ENCODE measurements at regions of chr6 and their contacts with region 1.

Region 1: DNA sequence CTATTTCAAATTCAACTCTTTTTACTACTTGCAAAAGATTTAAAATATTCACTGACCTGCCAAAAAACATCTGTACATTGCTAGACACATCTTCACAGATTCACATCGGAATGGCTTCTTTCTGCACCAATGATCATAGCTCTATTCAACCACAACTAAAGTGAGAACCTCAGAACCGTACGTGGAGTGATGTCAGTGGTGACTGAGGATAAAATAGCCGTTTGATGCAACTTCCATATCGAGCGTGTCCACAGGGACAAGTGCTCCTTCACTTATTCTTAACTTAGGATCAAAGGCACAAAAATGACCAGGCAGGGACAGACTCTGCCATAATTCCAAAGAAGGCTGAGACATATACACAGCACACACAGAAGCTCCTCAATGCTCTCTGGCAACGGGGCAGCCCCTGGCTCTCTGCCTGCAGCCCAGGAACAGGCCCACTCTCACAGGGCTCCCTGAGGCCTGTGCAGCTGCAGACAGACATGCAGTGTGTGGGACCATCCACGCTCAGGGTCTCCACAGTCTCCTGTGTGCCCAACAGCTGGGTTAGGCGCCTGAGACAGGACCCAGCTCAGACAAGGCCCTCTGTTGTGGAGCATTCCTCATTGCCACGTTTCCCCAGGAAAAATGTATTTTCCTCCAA is 22.8 kb downstream of the FYN start:
- DNase-seq: peak in 2 of 9 experiments; percentile 57 to 74
- ATAC-seq: peak; percentile 57
- H3K4me3 ChIP-seq: no peak overlapping the region
- H3K4me3 Mint-ChIP-seq: peak overlapping the region; percentile 40
- H3K27ac ChIP-seq: peak overlapping the region in 1 of 2 experiments; percentile 29
- H3K27ac Mint-ChIP-seq: peak overlapping the region; percentile 85
- H3K4me1 ChIP-seq: peaks cover 97% of the 10 kb centered on the region
- H3K4me1 Mint-ChIP-seq: peaks cover 65% of the 10 kb centered on the region
- H3K27me3 ChIP-seq: no peaks in the 10 kb centered on the region
- H3K27me3 Mint-ChIP-seq: no peaks in the 10 kb centered on the region
- CTCF ChIP-seq: no peak

Region 2: DNA sequence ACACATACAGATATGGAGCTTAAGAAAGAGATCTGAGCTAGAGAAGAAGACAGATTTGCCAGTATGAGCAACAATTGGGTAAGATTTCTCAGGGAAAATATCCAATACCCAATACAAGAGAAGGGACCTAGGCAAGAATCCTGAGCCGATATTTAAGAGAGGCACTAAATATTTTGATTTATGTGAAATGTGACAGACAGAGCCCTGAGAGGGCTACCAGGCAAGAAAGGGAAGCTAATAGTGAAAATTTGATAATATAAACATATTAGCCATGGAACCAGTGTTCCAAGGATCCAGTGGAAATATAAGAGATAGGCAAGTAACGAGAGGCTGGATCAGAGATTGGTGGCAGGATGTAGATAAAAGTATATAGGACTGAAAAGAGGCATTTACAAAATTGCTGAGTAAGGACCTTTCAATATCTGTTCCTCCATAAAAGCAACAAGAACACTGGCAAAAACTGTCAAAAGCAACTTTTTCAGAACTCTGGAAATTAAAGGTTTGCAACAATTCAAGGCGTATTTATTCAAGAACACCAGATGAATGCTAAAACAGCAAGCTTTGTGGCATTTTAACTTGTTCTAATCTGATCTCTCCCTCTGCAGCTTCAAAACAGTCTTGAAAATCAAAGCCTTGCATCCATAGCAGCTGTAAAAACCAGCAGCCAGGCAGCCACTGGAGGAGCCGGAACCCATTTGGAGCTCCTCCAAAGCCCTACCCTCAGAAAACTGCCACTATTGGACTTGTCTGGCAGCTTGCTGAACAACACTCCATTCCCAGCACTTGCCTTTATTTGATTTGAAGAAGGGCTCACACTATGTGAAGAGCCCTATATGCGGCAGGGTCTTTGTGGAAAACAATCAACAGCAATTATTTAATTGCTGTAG is 426.2 kb before region 1 on chr6:
- CTCF ChIA-PET with region 1: no interaction called
- POLR2A ChIA-PET with region 1: no interaction called
- intact Hi-C with region 1: no loop called
- DNase-seq: no peak
- ATAC-seq: no peak
- H3K4me3 ChIP-seq: no peak overlapping the region
- H3K4me3 Mint-ChIP-seq: no peak overlapping the region
- H3K27ac ChIP-seq: no peak overlapping the region
- H3K27ac Mint-ChIP-seq: no peak overlapping the region
- H3K4me1 ChIP-seq: peaks cover 6% of the 10 kb centered on the region
- H3K4me1 Mint-ChIP-seq: peaks cover 44% of the 10 kb centered on the region
- H3K27me3 ChIP-seq: no peaks in the 10 kb centered on the region
- H3K27me3 Mint-ChIP-seq: no peaks in the 10 kb centered on the region
- CTCF ChIP-seq: no peak

Region 3: GRCh38 chr6:111804627-111805235 is 45.7 kb before region 1 on chr6:
- CTCF ChIA-PET with region 1: interaction called, 3 read pairs
- POLR2A ChIA-PET with region 1: no interaction called
- intact Hi-C with region 1: loop called in 1 of 2 experiments (anchors 2 kb)
- DNase-seq: peak; percentile 27 to 92 (median 62)
- ATAC-seq: peak; percentile 73
- H3K4me3 ChIP-seq: no peak overlapping the region
- H3K4me3 Mint-ChIP-seq: peak overlapping the region; percentile 60
- H3K27ac ChIP-seq: peak overlapping the region; percentile 16 to 84
- H3K27ac Mint-ChIP-seq: peak overlapping the region; percentile 97
- H3K4me1 ChIP-seq: peaks cover 70% of the 10 kb centered on the region
- H3K4me1 Mint-ChIP-seq: peaks cover 95% of the 10 kb centered on the region
- H3K27me3 ChIP-seq: no peaks in the 10 kb centered on the region
- H3K27me3 Mint-ChIP-seq: no peaks in the 10 kb centered on the region
- CTCF ChIP-seq: peak; percentile 53

Region 4: GRCh38 chr6:111865909-111866546 is 15.6 kb after region 1 on chr6:
- CTCF ChIA-PET with region 1: interaction called, 5 read pairs
- POLR2A ChIA-PET with region 1: interaction called, 4 read pairs
- intact Hi-C with region 1: loop called (anchors 1 to 2 kb)
- DNase-seq: no peak
- ATAC-seq: no peak
- H3K4me3 ChIP-seq: no peak overlapping the region
- H3K4me3 Mint-ChIP-seq: peak overlapping the region; percentile 53
- H3K27ac ChIP-seq: no peak overlapping the region
- H3K27ac Mint-ChIP-seq: peak overlapping the region; percentile 34
- H3K4me1 ChIP-seq: peaks cover 97% of the 10 kb centered on the region
- H3K4me1 Mint-ChIP-seq: peaks cover 96% of the 10 kb centered on the region
- H3K27me3 ChIP-seq: no peaks in the 10 kb centered on the region
- H3K27me3 Mint-ChIP-seq: no peaks in the 10 kb centered on the region
- CTCF ChIP-seq: no peak